Spleen (tissue), 13 donors: ENCODE measurements at regions of chr13 and their contacts with region 1.

Region 1: DNA sequence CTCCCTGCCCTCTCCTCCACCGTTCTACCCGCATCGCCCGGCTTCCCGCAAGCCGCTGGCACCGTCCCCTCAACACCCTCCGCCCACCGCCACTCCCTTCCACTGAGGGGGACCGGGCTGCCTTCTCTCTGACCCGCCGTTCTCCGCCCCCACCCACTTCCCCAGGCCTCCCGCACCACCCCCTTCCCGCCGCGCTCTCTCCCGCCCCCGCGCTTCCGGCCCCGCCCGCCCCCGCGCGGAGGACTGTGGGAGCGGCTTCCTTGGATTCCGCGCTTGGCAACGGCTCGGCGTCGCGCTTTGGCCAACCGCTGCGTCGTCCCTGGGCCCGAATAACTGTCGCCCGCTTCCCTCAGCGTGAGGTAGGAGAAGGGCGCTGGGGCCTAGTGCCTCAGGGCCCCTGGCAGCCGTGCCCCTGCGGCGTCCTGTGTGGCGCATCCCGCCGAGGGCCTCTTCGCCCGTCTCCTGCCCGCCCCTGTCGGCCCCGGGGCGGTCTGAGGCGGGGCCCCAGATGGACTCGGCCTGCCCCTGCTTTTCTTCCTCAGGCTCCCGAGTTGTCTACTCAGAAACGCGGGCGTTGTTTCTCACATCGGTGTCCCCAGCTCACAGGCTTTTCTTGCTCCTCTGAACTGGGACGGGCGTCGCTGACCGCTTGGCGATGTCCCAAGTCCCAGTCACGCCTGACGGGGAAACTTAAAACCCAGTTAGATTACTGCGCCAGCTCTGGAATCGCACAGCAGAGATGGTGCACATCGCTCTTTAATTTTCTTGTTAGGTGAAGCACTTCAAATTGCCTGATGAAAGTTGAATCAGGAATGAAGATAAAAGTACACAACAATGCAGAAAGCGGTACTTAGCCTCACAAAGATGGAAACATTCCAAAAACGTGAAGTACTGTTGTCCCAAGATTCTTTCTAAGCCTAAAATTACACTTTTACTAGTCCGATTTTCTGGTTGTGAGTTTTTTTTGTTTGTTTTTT is at the start of gene IFT88:
- DNase-seq: peak; percentile 97
- H3K4me3 ChIP-seq: peak within 1 kb of the TSS; percentile 70 to 96 (median 86)
- H3K27ac ChIP-seq: peak within 1 kb of the TSS; percentile 67 to 93 (median 91)
- H3K4me1 ChIP-seq: peaks cover 0 to 21% (median 17%) of the 10 kb centered on the region in 6 donors
- H3K27me3 ChIP-seq: no peaks in the 10 kb centered on the region
- CTCF ChIP-seq: peak in 5 of 11 experiments; percentile 5 to 53 (median 32)
- POLR2A ChIP-seq: peak in 1 of 3 donors; percentile 48
- total RNA-seq, gene IFT88: 8.8 to 25.5 (median 17.3) TPM

Region 2: DNA sequence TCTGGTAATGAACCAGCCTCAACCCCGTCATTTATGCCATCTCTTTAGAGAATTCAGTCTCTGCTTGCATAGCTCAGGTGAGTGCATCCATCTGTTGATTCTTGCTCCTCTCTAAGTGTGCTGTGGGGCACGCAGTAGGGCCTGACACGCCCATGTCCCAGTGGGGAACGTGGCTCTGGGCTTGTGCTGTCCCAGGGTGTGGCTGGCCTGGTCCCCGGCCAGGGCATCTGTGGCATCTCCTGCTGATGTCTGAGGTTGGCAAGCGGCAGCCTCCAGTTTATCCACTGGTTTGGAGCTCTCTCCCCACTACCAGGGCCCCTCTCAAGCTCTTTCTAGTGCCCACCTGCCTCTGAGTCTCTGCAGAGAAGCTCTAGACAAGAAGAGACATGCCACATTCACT is 188.5 kb before region 1 on chr13:
- intact Hi-C with region 1: no loop called
- DNase-seq: peak; percentile 52
- H3K4me3 ChIP-seq: no peak overlapping the region
- H3K27ac ChIP-seq: no peak overlapping the region
- H3K4me1 ChIP-seq: no peaks in the 10 kb centered on the region
- H3K27me3 ChIP-seq: no peaks in the 10 kb centered on the region
- CTCF ChIP-seq: no peak
- POLR2A ChIP-seq: no peak

Region 3: DNA sequence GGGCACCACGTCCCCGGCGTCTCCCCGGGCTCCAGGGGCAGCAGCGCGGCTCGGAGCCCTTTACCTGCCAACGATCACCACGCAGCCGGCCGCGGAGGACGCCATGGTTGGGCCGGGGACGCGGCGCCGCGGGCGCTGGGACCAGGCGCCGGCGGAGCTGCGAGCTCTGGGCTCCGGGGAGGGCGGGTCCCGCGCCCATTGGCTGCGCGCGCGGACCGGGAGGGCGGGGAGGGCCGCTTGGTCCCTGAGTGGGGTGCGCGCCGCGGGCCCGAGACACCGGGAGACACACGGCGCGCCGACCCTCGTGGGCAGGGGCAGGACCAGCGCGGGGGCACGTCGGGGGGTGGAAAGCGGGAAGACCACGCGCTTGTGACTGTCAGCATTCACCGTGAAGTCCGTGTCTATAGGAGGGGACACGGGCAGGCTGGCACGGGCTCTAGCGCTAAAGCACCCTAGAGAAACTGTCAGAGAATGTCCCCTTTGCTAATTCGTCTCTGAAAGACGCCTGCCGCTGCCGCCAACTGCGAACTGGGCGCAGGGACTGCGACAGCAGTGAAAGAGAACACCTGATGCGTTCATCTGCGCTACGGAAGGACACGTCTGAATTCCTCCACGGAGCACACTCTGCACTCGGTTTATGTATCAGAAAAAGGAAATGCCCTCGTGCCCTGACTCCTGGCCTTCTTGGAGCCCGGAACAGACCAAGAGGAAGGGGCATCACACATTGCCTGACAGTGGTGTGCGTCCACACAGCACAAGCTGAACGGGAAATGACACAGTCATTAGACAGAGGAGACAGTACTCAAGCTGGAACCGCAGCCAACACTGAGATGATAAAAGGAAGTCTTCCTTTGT is 41.3 kb before region 1 on chr13 and contains the start of gene CRYL1:
- intact Hi-C with region 1: loop called (anchors 5 kb)
- DNase-seq: peak; percentile 96
- H3K4me3 ChIP-seq: peak within 1 kb of the TSS; percentile 71 to 94 (median 81)
- H3K27ac ChIP-seq: peak within 1 kb of the TSS; percentile 69 to 95 (median 90)
- H3K4me1 ChIP-seq: peaks cover 10 to 34% (median 18%) of the 10 kb centered on the region in 6 donors
- H3K27me3 ChIP-seq: no peaks in the 10 kb centered on the region
- CTCF ChIP-seq: no peak
- POLR2A ChIP-seq: peak in 1 of 3 donors; percentile 37
- total RNA-seq, gene CRYL1: 18.4 to 46.5 (median 35.9) TPM

Region 4: DNA sequence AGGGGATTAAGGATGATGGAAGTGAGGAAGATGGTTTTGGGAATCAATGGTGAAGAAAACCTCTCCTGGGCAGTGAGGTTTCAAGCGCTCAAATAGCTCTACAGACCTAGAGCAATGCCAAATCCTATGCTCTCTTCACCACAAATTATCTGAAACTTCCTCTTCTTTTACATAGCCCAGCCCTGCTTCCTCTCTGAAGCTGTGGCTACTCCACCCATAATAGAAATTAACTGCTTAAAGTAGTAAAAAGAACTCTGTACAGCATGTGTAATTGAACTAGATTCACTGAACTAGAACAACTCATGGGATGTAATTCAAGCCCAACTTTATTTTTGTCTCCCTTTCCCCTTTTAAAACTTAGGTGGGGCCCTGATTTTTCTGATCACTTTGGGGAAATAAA is 20.6 kb before region 1 on chr13:
- intact Hi-C with region 1: no loop called
- DNase-seq: no peak
- H3K4me3 ChIP-seq: no peak overlapping the region
- H3K27ac ChIP-seq: peak overlapping the region in 3 of 8 donors; percentile 17 to 28 (median 24)
- H3K4me1 ChIP-seq: peaks cover 9 to 33% (median 24%) of the 10 kb centered on the region in 6 donors
- H3K27me3 ChIP-seq: no peaks in the 10 kb centered on the region
- CTCF ChIP-seq: no peak
- POLR2A ChIP-seq: no peak